K562 (cell line): ENCODE measurements at regions of chr3 and their contacts with region 1.

Region 1: DNA sequence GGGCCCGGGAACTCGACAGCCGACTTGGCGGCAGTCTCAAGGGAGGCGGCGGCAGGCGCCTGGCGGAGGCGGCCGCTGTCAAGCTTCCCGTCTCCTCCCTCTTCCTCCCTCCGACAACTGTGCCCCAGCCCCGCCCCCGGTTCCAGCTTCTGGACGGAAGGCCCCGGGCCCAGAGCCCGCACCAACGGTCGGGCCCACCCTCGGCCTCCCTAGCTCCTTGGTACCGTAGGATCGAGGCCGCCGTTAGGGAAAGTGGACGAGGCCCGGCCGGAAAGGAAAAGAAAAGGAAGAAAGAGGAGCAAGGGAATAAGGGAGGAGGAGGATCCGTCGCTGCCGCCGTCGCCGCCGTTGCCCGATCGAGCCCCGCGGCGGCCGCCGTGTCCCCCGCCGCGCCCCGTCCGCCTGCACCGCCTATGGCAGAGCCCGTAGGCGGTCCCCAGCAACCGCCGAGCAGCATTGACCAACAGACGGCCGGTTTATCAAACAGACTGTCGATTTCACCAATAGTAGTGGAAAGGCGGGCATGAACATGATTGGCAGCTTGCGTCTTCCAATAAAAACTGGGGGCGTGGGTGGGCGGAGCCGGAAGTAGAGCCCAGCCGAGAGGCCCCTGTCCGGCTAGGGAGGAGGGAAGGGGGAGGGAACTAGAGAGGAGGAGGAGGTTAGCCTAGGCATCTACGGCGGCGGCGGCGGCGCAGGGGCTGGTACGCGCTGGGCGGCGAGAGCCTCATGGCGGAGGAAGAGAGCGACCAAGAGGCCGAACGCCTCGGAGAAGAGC is at the starts of genes CGGBP1 and ZNF654:
- DNase-seq: peak; percentile 84 to 96 (median 89)
- ATAC-seq: peak; percentile 89
- H3K4me3 ChIP-seq: peak within 1 kb of the TSS; percentile 96
- H3K27ac ChIP-seq: peak within 1 kb of the TSS; percentile 93
- H3K4me1 ChIP-seq: peaks cover 0 to 11% of the 10 kb centered on the region in 2 experiments; a peak in 2 of 5 replicates
- H3K27me3 ChIP-seq: no peaks in the 10 kb centered on the region
- CTCF ChIP-seq: no peak
- EP300 ChIP-seq: no peak
- POLR2A ChIP-seq: peak; percentile 84
- RAD21 ChIP-seq: no peak
- polyA plus RNA-seq, gene CGGBP1: 26.6 to 35.8 TPM
- polyA plus RNA-seq, gene ZNF654: 2.4 to 2.5 TPM

Region 2: GRCh38 chr3:87798567-87798947 is 260.2 kb before region 1 on chr3:
- CTCF ChIA-PET with region 1: no interaction called
- POLR2A ChIA-PET with region 1: no interaction called
- in situ Hi-C with region 1: no loop called
- intact Hi-C with region 1: loop called (anchors 5 kb)
- DNase-seq: peak in 2 of 4 experiments; percentile 14 to 44
- ATAC-seq: no peak
- H3K4me3 ChIP-seq: no peak overlapping the region
- H3K27ac ChIP-seq: peak overlapping the region; percentile 87
- H3K4me1 ChIP-seq: peaks cover 16 to 29% of the 10 kb centered on the region in 2 experiments
- H3K27me3 ChIP-seq: no peaks in the 10 kb centered on the region
- CTCF ChIP-seq: no peak
- EP300 ChIP-seq: peak; percentile 2; the same call in 1 of the 2 replicates
- POLR2A ChIP-seq: no peak
- RAD21 ChIP-seq: no peak

Region 3: GRCh38 chr3:88034491-88035275 is 24.1 kb before region 1 on chr3:
- CTCF ChIA-PET with region 1: interaction called, 3 read pairs
- POLR2A ChIA-PET with region 1: interaction called, 4 read pairs
- in situ Hi-C with region 1: no loop called
- intact Hi-C with region 1: loop called (anchors 2 kb)
- DNase-seq: peak; percentile 10 to 80 (median 38)
- ATAC-seq: peak; percentile 90
- H3K4me3 ChIP-seq: no peak overlapping the region
- H3K27ac ChIP-seq: peak overlapping the region; percentile 59; the same call in 2 of the 3 replicates
- H3K4me1 ChIP-seq: peaks cover 7 to 8% of the 10 kb centered on the region in 2 experiments; a peak in 4 of 5 replicates
- H3K27me3 ChIP-seq: no peaks in the 10 kb centered on the region
- CTCF ChIP-seq: no peak
- EP300 ChIP-seq: peak; percentile 24; the same call in 1 of the 2 replicates
- POLR2A ChIP-seq: 0 out of 2 replicates have a peak, but pooled peaks have one; percentile 34
- RAD21 ChIP-seq: no peak

Region 4: GRCh38 chr3:88113311-88114162 is 54.8 kb after region 1 on chr3:
- CTCF ChIA-PET with region 1: no interaction called
- POLR2A ChIA-PET with region 1: no interaction called
- in situ Hi-C with region 1: no loop called
- intact Hi-C with region 1: loop called (anchors 2 kb)
- DNase-seq: peak; percentile 25 to 79 (median 47)
- ATAC-seq: peak; percentile 97
- H3K4me3 ChIP-seq: no peak overlapping the region
- H3K27ac ChIP-seq: no peak overlapping the region
- H3K4me1 ChIP-seq: no peaks in the 10 kb centered on the region; a peak in 1 of 5 replicates
- H3K27me3 ChIP-seq: no peaks in the 10 kb centered on the region
- CTCF ChIP-seq: peak; percentile 44 to 63 (median 52)
- EP300 ChIP-seq: no peak
- POLR2A ChIP-seq: no peak
- RAD21 ChIP-seq: peak; percentile 43 to 68

Region 5: DNA sequence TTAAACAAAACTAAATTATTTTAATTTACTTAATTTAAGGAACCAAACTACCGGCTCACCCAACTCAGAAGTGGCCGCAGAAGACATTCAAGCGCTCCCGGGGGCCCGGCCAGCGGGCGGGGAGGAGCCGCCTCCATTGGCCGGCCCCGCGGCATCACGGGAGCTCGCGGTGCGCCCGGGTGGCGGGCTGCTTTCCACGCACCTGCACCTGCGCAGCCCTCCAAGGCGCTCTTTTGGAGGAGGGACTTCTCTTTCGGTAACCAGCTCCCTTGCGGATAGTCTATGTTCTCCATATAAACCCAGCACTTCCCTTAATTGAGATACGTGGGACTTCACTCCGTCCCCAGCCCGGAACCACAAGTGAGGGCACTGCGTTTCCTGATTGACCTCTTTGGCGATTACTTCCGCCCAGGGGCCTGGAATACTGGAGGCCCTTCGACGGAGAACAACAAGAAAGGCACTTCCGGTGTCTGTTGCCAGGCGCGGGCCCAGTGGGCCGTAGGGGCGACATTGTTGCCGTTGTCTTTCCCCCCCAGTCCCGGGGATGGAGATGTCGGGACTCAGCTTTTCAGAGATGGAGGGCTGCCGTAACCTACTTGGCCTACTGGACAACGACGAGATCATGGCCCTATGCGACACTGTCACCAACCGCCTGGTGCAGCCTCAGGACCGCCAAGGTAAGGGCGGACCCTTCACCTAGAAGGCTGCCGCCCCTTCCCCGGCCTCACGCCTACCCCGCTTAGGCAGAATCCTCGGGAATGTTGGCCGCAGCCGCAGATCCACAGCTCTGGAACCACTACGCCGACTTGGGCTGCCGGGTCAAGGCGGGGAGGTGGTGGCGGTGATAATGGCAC is 91.0 kb after region 1 on chr3 and contains the start of gene C3orf38:
- CTCF ChIA-PET with region 1: no interaction called
- POLR2A ChIA-PET with region 1: interaction called, 4 read pairs
- in situ Hi-C with region 1: no loop called
- intact Hi-C with region 1: loop called (anchors 2 kb)
- DNase-seq: peak; percentile 69 to 90 (median 76)
- ATAC-seq: peak; percentile 91
- H3K4me3 ChIP-seq: peak within 1 kb of the TSS; percentile 93
- H3K27ac ChIP-seq: peak within 1 kb of the TSS; percentile 99
- H3K4me1 ChIP-seq: peaks cover 5 to 8% of the 10 kb centered on the region in 2 experiments; a peak in 2 of 5 replicates
- H3K27me3 ChIP-seq: no peaks in the 10 kb centered on the region
- CTCF ChIP-seq: no peak
- EP300 ChIP-seq: no peak
- POLR2A ChIP-seq: peak; percentile 83
- RAD21 ChIP-seq: no peak
- polyA plus RNA-seq, gene C3orf38: 15.1 to 20.6 TPM